ENCODE measurements at regions of chr6 and their contacts with region 1.

Region 1: GRCh38 chr6:14889611-14890593 is 356.0 kb upstream of the JARID2 start:
- DNase-seq: no peak
- ATAC-seq: no peak
- H3K4me3 ChIP-seq: no peak overlapping the region
- H3K27ac ChIP-seq: no peak overlapping the region
- H3K4me1 ChIP-seq: peaks cover 0 to 20% (median 15%) of the 10 kb centered on the region in 9 donors
- H3K27me3 ChIP-seq: no peaks in the 10 kb centered on the region
- CTCF ChIP-seq: no peak

Region 2: DNA sequence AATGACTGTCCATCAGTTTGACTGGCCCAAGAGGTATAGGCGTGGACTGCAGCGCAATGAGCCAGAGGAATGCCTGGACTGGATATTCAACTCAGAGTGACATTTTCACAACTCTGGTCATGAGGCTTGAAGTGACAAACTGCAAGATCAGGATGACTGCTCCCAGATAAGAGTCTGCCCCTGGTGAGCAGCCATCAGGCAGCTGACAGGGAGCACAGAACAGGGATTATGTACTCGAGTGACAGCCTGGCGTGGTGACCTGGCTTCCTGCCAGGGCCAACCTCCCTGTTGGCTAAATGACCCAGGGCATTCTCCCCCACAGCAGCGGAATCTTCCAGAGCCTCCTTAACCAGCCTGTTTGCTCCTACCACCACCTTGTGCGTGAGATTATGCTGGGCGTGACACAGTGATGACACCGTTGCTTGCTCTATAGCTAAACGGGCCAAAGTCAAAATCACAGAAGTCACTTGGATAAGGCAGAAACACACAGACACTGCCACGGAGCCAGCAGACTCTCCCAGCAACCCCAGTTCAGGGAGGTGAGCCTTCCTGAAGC is 146.9 kb after region 1 on chr6:
- intact Hi-C with region 1: loop called in 2 of 10 experiments (anchors 5 to 10 kb)
- DNase-seq: peak; percentile 79 to 84
- ATAC-seq: peak; percentile 89 to 99 (median 96)
- H3K4me3 ChIP-seq: peak overlapping the region in 3 of 10 donors; percentile 10 to 23 (median 14)
- H3K27ac ChIP-seq: peak overlapping the region in 8 of 10 donors; percentile 44 to 69 (median 64)
- H3K4me1 ChIP-seq: peaks cover 0 to 14% (median 4%) of the 10 kb centered on the region in 9 donors
- H3K27me3 ChIP-seq: no peaks in the 10 kb centered on the region
- CTCF ChIP-seq: no peak

Measured in heart right ventricle (tissue), 16 donors.